CD4-positive, alpha-beta memory T cell (primary cell): ENCODE measurements at regions of chr12 and their contacts with region 1.

Region 1: GRCh38 chr12:107093417-107094182 is at the start of gene CRY1:
- DNase-seq: peak; percentile 92 to 97 (median 94)
- H3K4me3 ChIP-seq: peak within 1 kb of the TSS; percentile 94 to 98
- H3K4me3 Mint-ChIP-seq: no peak within 1 kb of the TSS
- H3K27ac ChIP-seq: peak within 1 kb of the TSS; percentile 99
- H3K27ac Mint-ChIP-seq: no peak within 1 kb of the TSS
- H3K4me1 ChIP-seq: peaks cover 26% of the 10 kb centered on the region
- H3K4me1 Mint-ChIP-seq: peaks cover under 1 to 19% (median 11%) of the 10 kb centered on the region in 4 donors
- H3K27me3 ChIP-seq: no peaks in the 10 kb centered on the region
- H3K27me3 Mint-ChIP-seq: peaks cover 0 to 4% of the 10 kb centered on the region in 2 donors
- total RNA-seq, gene CRY1: 31.1 to 32.2 TPM

Region 2: GRCh38 chr12:106357549-106358395 is 735.8 kb before region 1 on chr12 and contains the start of gene POLR3B:
- CTCF ChIA-PET with region 1: no interaction called
- POLR2A ChIA-PET with region 1: interaction called, 3 read pairs
- intact Hi-C with region 1: loop called (anchors 1 kb)
- DNase-seq: peak; percentile 96 to 98 (median 97)
- H3K4me3 ChIP-seq: peak within 1 kb of the TSS; percentile 77 to 87
- H3K4me3 Mint-ChIP-seq: peak within 1 kb of the TSS; percentile 86 to 95 (median 94)
- H3K27ac ChIP-seq: peak within 1 kb of the TSS; percentile 68
- H3K27ac Mint-ChIP-seq: peak within 1 kb of the TSS; percentile 92 to 97 (median 95)
- H3K4me1 ChIP-seq: peaks cover 20% of the 10 kb centered on the region
- H3K4me1 Mint-ChIP-seq: peaks cover 10 to 20% (median 16%) of the 10 kb centered on the region in 4 donors
- H3K27me3 ChIP-seq: no peaks in the 10 kb centered on the region
- H3K27me3 Mint-ChIP-seq: no peaks in the 10 kb centered on the region
- total RNA-seq, gene POLR3B: 6.6 to 7.5 TPM

Region 3: DNA sequence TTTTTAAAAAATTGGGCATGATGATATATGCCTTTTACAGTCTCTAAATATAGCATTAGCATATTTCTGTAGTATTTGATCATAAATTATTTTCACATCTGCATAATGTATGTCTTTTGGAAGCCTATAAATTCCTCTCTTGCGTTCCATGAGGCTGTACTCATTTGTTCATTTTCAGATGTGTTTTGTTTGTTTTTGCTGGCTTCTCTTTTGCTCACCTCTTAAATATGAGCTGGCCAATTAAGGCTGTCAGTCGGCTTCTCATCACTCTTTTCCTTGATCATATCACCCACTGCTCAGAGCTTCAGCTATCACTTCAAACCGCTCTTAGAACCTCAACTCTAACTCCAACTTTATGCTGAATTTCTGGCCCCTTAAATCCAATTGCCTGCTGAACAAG is 131.3 kb before region 1 on chr12:
- CTCF ChIA-PET with region 1: no interaction called
- POLR2A ChIA-PET with region 1: no interaction called
- intact Hi-C with region 1: no loop called
- DNase-seq: no peak
- H3K4me3 ChIP-seq: no peak overlapping the region
- H3K4me3 Mint-ChIP-seq: no peak overlapping the region
- H3K27ac ChIP-seq: no peak overlapping the region
- H3K27ac Mint-ChIP-seq: peak overlapping the region in 1 of 7 donors; percentile 53
- H3K4me1 ChIP-seq: peaks cover 15% of the 10 kb centered on the region
- H3K4me1 Mint-ChIP-seq: peaks cover 25 to 41% (median 33%) of the 10 kb centered on the region in 4 donors
- H3K27me3 ChIP-seq: no peaks in the 10 kb centered on the region
- H3K27me3 Mint-ChIP-seq: no peaks in the 10 kb centered on the region

Region 4: DNA sequence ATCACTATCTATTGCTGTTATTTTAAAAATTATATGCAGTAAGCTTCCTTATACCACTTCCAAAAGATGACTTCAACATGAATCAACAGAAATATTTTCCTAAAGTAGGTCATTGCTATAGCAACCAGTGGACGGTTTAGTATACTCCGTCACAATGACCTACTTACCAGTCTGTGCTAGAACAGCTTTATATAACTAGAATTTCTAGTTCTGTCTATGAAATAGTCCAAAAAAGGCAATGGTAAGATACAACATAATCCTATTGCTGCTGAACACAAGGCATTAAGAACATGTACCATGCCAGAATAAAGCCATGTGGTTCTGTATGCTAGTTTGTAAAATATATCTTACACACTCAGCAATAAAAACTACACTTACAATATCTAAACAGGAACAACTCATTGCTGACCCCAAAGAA is 66.0 kb before region 1 on chr12:
- CTCF ChIA-PET with region 1: no interaction called
- POLR2A ChIA-PET with region 1: interaction called, 17 read pairs
- intact Hi-C with region 1: loop called (anchors 1 kb)
- DNase-seq: peak; percentile 66 to 90 (median 82)
- H3K4me3 ChIP-seq: no peak overlapping the region
- H3K4me3 Mint-ChIP-seq: peak overlapping the region; percentile 26 to 85 (median 74)
- H3K27ac ChIP-seq: peak overlapping the region; percentile 91
- H3K27ac Mint-ChIP-seq: peak overlapping the region; percentile 95 to 100 (median 99)
- H3K4me1 ChIP-seq: peaks cover 75% of the 10 kb centered on the region
- H3K4me1 Mint-ChIP-seq: peaks cover 49 to 82% (median 68%) of the 10 kb centered on the region in 4 donors
- H3K27me3 ChIP-seq: no peaks in the 10 kb centered on the region
- H3K27me3 Mint-ChIP-seq: no peaks in the 10 kb centered on the region

Region 5: DNA sequence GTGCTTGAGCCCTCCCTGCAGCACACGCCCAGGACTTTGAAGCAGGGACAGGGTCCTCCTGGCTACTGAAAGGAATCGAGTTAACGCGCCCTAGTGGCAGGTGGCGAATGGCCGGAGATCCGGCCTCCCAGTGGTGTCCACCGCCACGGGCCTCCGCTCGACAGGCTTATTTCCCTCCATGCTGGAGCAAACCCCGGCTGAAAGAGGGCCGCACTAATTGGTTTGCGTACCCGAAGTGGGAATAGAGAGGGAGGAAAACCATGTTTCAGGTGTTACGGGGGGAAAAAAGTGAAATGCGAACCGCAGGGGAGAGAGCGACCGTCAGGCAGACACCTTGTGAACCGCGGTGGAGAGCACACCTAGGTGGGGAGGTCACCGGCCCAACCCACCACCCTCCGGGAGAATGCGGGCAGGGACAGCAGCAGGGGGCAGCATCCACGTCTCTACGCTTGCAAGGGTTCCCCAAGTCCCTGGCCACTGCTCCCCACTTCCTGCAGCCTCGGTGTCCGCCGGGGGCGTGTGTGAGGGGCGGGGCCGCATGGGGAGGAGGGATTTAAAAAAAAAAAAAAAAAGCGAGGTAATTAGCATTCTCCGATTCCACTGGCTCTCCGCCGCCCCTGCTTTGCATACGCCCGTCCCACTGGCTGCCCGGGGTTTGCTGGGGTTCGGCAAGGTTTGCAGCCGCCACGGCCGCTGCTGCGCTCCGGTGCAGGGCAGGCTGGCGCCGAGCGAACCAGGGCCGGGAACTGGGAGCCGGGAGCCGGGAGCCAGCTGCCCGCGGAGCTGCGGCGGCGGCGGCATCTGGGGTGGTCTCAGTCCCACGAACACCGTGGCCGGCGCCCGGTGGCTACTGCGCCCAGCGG is 224.4 kb after region 1 on chr12:
- CTCF ChIA-PET with region 1: no interaction called
- POLR2A ChIA-PET with region 1: interaction called, 4 read pairs
- intact Hi-C with region 1: loop called (anchors 1 kb)
- DNase-seq: peak; percentile 81 to 93 (median 84)
- H3K4me3 ChIP-seq: peak overlapping the region; percentile 73 to 84
- H3K4me3 Mint-ChIP-seq: peak overlapping the region; percentile 83 to 93 (median 86)
- H3K27ac ChIP-seq: peak overlapping the region; percentile 46
- H3K27ac Mint-ChIP-seq: peak overlapping the region; percentile 67 to 98 (median 75)
- H3K4me1 ChIP-seq: peaks cover 31% of the 10 kb centered on the region
- H3K4me1 Mint-ChIP-seq: peaks cover 18 to 37% (median 30%) of the 10 kb centered on the region in 4 donors
- H3K27me3 ChIP-seq: no peaks in the 10 kb centered on the region
- H3K27me3 Mint-ChIP-seq: peaks cover 0 to 5% of the 10 kb centered on the region in 2 donors

Region 6: GRCh38 chr12:107607464-107608392 is 514.1 kb after region 1 on chr12:
- CTCF ChIA-PET with region 1: interaction called, 5 read pairs
- POLR2A ChIA-PET with region 1: no interaction called
- intact Hi-C with region 1: loop called (anchors 1 kb)
- DNase-seq: peak; percentile 67 to 75 (median 70)
- H3K4me3 ChIP-seq: no peak overlapping the region
- H3K4me3 Mint-ChIP-seq: no peak overlapping the region
- H3K27ac ChIP-seq: no peak overlapping the region
- H3K27ac Mint-ChIP-seq: peak overlapping the region in 1 of 7 donors; percentile 35
- H3K4me1 ChIP-seq: no peaks in the 10 kb centered on the region
- H3K4me1 Mint-ChIP-seq: peaks cover 0 to 3% (median 0%) of the 10 kb centered on the region in 4 donors
- H3K27me3 ChIP-seq: no peaks in the 10 kb centered on the region
- H3K27me3 Mint-ChIP-seq: no peaks in the 10 kb centered on the region

Region 7: DNA sequence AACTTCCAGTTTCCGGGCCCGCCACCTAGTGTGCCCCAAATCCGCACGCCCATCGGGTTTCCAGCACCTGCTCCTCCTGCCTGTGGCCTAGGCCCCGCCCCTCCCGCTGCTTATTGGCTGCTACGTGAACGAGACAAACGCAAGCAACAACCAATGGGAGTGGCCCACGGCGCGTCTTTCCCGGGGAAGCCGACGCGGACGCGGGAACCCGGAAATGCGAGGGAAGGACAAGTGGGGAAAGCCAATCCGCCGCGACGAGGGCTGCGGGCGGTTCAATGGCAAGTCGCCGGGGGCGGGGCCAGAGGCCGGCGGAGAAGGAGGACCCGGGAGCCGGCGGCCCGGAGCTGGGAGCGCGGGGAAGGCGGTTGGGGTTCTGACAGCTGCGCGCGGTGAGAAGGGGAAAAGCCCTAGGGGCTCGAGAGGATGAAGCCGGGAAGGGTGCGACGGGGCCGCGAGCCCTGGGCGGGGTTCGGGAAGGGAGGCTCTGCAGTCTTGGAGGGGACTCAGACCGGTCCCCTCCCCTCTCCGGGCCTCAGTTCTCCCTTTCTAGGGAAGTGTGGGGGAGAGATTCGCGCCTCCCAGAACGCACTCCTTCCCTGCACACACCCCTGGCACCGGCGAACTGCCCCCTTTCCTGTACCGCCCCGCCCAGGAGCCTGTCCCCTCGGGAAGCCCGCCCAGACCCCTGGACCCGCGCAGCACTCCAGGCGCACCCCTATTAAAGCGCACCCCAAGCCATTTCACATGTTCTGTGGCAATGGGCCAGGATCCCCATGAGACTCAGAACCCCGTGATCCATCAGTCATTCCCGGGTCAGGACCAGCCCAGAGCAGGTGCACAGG is 1421.6 kb after region 1 on chr12 and contains the start of gene FICD:
- CTCF ChIA-PET with region 1: no interaction called
- POLR2A ChIA-PET with region 1: no interaction called
- intact Hi-C with region 1: loop called (anchors 10 kb)
- DNase-seq: peak; percentile 98 to 100 (median 99)
- H3K4me3 ChIP-seq: peak within 1 kb of the TSS; percentile 84 to 90
- H3K4me3 Mint-ChIP-seq: peak within 1 kb of the TSS; percentile 91 to 97 (median 94)
- H3K27ac ChIP-seq: peak within 1 kb of the TSS; percentile 86
- H3K27ac Mint-ChIP-seq: peak within 1 kb of the TSS; percentile 90 to 97 (median 95)
- H3K4me1 ChIP-seq: peaks cover 27% of the 10 kb centered on the region
- H3K4me1 Mint-ChIP-seq: peaks cover 16 to 42% (median 28%) of the 10 kb centered on the region in 4 donors
- H3K27me3 ChIP-seq: no peaks in the 10 kb centered on the region
- H3K27me3 Mint-ChIP-seq: peaks cover 1% of the 10 kb centered on the region in 2 donors
- total RNA-seq, gene FICD: 10.6 to 12.3 TPM